ENCODE measurements at regions of chr15 and their contacts with region 1.

Region 1: GRCh38 chr15:48963524-48964113 is at the start of gene SHC4:
- DNase-seq: no peak
- H3K4me3 ChIP-seq: peak within 1 kb of the TSS; percentile 57 to 63 (median 60)
- H3K27ac ChIP-seq: peak within 1 kb of the TSS in 3 of 4 donors; percentile 25 to 47 (median 42)
- H3K4me1 ChIP-seq: peaks cover 14 to 25% (median 23%) of the 10 kb centered on the region in 4 donors
- H3K27me3 ChIP-seq: no peaks in the 10 kb centered on the region
- CTCF ChIP-seq: peak; percentile 5 to 33 (median 15)
- EP300 ChIP-seq: no peak
- POLR2A ChIP-seq: no peak
- total RNA-seq, gene SHC4: 1.8 to 2.3 (median 2.1) TPM

Region 2: GRCh38 chr15:48877630-48878595 is 85.7 kb before region 1 on chr15 and contains the start of gene EID1:
- intact Hi-C with region 1: loop called (anchors 5 kb)
- DNase-seq: peak; percentile 98
- H3K4me3 ChIP-seq: peak within 1 kb of the TSS; percentile 69 to 93 (median 72)
- H3K27ac ChIP-seq: peak within 1 kb of the TSS; percentile 86 to 94 (median 92)
- H3K4me1 ChIP-seq: peaks cover 14 to 22% (median 19%) of the 10 kb centered on the region in 4 donors
- H3K27me3 ChIP-seq: no peaks in the 10 kb centered on the region
- CTCF ChIP-seq: peak in 1 of 3 experiments; percentile 18
- EP300 ChIP-seq: no peak
- POLR2A ChIP-seq: peak; percentile 45
- total RNA-seq, gene EID1: 250 to 391 (median 334) TPM

Region 3: GRCh38 chr15:49075885-49076284 is 112.3 kb after region 1 on chr15:
- intact Hi-C with region 1: no loop called
- DNase-seq: no peak
- H3K4me3 ChIP-seq: no peak overlapping the region
- H3K27ac ChIP-seq: no peak overlapping the region
- H3K4me1 ChIP-seq: no peaks in the 10 kb centered on the region
- H3K27me3 ChIP-seq: no peaks in the 10 kb centered on the region
- CTCF ChIP-seq: no peak
- EP300 ChIP-seq: no peak
- POLR2A ChIP-seq: no peak